ENCODE measurements at regions of chr20 and their contacts with region 1.

Region 1: DNA sequence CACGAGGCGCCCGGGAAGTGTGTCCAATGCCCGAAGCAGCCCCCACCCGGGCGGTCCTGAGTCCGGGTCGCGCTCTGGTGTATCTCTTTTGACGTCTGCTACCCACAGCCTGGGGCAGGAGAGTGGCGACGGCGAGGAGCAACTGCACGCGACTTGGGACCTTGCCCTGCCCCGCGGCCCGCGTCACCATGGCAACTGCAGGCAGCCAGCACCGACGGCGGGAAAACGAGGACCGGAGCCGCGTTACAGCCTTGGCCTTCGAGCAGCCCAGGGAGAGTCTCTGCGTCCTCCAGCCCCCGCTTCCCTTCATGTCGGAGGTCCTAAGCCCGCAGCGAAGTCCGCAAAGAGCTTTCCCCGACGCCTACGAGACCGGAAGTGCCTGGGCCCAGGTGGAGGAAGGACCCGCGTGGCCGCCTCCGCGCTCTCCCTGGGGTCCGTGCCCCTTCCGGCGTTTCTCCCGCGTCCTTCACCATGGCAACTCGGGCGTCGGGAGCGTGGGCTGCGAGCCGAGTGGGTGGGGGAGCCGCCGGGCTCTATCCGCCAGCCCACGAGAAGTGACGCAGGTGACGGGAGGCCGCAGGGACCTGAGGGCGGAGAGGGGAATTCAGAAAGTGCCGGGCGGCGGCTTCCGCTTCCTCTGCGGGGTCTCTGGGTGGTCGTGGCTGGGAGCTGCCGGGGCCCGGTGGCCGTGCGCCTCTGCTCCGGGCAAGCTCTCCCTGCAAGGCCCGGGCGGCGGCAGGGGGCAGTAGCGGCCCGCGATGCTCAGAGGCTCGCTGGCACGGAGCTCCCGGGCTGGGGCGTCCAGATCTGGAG is 88.6 kb upstream of the TGM3 start:
- DNase-seq: no peak
- H3K4me3 ChIP-seq: peak overlapping the region; percentile 62
- CTCF ChIP-seq: peak; percentile 97

Region 2: GRCh38 chr20:2140561-2140960 is 66.6 kb before region 1 on chr20:
- CTCF ChIA-PET with region 1: no interaction called
- POLR2A ChIA-PET with region 1: no interaction called
- DNase-seq: no peak
- H3K4me3 ChIP-seq: no peak overlapping the region
- CTCF ChIP-seq: no peak

Region 3: DNA sequence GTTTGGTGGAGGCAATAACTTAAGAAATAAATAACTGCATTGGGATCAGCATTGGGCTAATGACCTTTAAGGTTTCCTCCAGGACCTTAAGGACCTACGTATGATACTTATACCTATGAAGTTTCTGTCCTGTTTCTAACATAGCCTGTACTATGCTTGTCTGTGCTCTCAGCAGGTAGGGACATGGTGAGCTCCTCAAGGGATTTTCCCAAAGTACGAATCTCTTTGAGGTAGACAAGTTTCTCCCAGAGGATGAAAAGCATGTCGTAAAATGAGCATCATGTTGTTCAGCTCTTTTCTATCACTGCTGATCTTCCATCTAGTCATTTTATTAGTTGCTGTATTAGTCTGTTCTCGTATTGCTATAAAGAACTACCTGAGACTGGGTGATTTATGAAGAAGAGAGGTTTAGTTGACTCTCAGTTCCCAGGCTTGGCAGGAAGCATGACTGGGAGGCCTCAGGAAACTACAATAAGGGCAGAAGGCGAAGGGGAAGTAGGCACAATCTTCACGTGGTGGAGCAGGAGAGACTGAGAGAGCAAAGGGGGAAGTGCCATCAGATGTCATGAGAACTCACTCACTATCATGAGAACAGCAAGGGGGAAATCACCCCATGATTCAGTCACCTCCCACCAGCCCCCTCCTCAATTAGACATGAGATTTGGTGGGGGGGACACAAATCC is 10.8 kb after region 1 on chr20:
- CTCF ChIA-PET with region 1: interaction called, 31 read pairs
- POLR2A ChIA-PET with region 1: no interaction called
- DNase-seq: no peak
- H3K4me3 ChIP-seq: no peak overlapping the region
- CTCF ChIP-seq: no peak

Region 4: DNA sequence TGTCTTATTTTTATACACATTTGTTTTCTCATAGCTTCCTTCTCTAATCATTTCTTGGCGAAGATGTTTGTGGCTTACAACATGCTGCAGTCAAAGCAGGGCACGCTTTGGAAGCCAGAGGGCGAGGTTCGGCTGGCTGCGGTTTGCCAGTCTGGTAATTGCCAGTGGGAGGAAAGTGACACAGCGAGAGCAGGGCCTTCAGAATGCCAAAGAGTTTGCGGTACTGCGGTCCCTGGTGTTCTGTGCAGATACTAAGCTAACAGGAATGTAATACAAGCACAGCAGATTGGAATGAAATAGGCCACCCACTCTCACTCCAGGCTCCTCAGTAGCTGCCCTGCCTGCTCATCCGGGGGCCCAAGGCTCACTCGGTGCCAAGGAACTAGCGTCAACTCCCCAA is 29.9 kb after region 1 on chr20:
- CTCF ChIA-PET with region 1: interaction called, 15 read pairs
- POLR2A ChIA-PET with region 1: interaction called, 4 read pairs
- DNase-seq: peak; percentile 98
- H3K4me3 ChIP-seq: no peak overlapping the region
- CTCF ChIP-seq: peak; percentile 5

Region 5: GRCh38 chr20:2387180-2387577 is 180.0 kb after region 1 on chr20:
- CTCF ChIA-PET with region 1: interaction called, 12 read pairs
- POLR2A ChIA-PET with region 1: no interaction called
- DNase-seq: no peak
- H3K4me3 ChIP-seq: no peak overlapping the region
- CTCF ChIP-seq: peak; percentile 41

Region 6: DNA sequence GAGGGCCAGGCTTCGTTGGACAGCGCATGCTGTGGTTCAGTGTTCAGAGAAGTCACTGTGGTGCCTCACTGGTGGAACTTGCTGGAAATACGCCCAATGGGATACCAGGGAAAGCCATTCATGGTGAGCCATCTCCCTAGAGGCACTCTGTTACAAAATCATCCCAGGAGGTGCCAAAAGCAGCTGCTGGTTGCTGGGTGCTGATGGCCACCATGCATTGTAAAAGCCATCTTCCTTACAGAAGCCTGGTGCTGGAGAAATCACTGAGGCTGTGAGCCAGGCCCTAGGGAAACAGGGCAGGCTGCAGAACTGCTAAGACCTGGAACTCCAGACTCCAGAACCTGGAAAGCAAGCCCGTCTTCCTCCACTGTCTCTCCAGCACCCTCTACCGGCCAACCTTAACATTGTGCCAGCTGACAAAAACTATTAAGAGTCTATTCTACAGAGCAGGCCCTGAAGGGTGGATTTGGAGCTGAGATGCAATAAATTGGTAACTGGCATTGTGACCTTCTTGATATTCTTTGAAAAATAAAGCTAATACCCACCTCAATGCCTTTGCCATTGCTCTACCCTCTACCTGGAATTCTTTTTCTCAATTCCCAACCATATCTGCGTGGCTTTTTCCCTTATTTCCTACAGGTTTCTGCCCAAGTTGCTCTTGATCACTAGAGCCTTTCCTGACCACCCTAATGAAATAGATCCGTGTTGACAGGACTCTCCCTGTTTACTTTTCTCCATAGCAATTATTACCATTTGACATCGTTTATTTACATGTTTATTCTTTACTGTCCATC is 245.0 kb after region 1 on chr20:
- CTCF ChIA-PET with region 1: interaction called, 191 read pairs
- POLR2A ChIA-PET with region 1: no interaction called
- DNase-seq: no peak
- H3K4me3 ChIP-seq: no peak overlapping the region
- CTCF ChIP-seq: peak; percentile 83

Measured in AG04449 (cell line).